IMR-90 (cell line): ENCODE measurements at regions of chrX and their contacts with region 1.

Region 1: GRCh38 chrX:154046031-154046781 is 26.5 kb upstream of the IRAK1 start:
- DNase-seq: peak; percentile 86
- ATAC-seq: peak; percentile 61
- H3K4me3 ChIP-seq: no peak overlapping the region
- H3K27ac ChIP-seq: peak overlapping the region; percentile 72
- H3K4me1 ChIP-seq: peaks cover 16% of the 10 kb centered on the region
- H3K27me3 ChIP-seq: no peaks in the 10 kb centered on the region
- CTCF ChIP-seq: peak; percentile 40
- POLR2A ChIP-seq: 0 out of 2 replicates have a peak, but pooled peaks have one; percentile 39
- RAD21 ChIP-seq: peak; percentile 44

Region 2: GRCh38 chrX:153909024-153909970 is 136.9 kb before region 1 on chrX:
- CTCF ChIA-PET with region 1: no interaction called
- POLR2A ChIA-PET with region 1: no interaction called
- dilution Hi-C with region 1: no loop called
- in situ Hi-C with region 1: no loop called
- intact Hi-C with region 1: no loop called
- DNase-seq: no peak
- ATAC-seq: peak; percentile 37; the same call in 1 of the 2 replicates
- H3K4me3 ChIP-seq: no peak overlapping the region
- H3K27ac ChIP-seq: no peak overlapping the region
- H3K4me1 ChIP-seq: no peaks in the 10 kb centered on the region
- H3K27me3 ChIP-seq: peaks cover 9% of the 10 kb centered on the region
- CTCF ChIP-seq: no peak
- POLR2A ChIP-seq: no peak
- RAD21 ChIP-seq: no peak

Region 3: DNA sequence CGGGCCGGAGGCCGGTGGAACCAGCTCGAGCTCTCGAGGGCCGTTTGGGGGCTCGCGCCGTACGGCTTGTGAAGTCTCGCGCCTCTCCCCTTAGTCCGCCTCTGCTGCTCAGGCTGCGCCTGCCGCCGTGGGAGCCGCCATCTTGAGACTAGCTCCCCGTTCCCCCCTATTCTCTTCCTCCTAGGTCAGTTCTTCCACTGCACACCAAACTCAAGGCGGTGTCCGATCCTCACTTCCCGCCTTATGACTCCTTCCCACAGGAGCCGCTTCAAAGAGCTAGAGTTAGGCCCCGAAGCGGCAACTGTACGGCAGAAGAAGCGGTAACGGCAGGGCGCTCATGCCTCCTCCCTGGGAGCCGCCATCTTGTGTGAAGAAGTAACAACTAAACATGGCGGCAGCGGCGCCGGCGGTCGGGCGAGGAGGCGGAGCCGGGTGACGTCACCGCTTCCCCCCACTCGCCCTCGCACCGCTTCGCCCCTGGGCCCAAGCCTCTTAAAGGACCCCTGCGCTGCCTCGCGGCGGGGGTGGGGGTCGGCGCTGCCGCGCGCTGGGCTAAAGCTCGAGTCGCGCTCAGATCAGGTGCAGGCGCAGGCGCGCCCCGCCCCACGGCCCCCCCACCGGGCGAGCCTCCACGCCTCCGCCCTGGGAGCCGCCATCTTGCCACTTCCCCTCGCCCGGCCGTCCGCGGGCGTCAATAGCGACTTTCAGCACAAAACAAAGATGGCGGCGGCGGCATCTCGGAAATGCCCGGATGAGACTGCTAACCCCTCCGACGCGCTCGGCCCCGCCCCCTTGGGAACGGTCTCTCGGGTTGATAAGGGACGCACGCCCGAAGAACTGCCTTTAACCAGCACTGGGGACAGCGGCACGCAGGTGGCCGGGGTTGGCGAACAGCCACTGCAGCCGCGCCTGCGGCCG is 74.5 kb before region 1 on chrX and contains the start of gene HCFC1:
- CTCF ChIA-PET with region 1: no interaction called
- POLR2A ChIA-PET with region 1: interaction called, 3 read pairs
- dilution Hi-C with region 1: no loop called
- in situ Hi-C with region 1: no loop called
- intact Hi-C with region 1: loop called (anchors 2 kb)
- DNase-seq: peak; percentile 84
- ATAC-seq: peak; percentile 40
- H3K4me3 ChIP-seq: peak within 1 kb of the TSS; percentile 96
- H3K27ac ChIP-seq: peak within 1 kb of the TSS; percentile 100
- H3K4me1 ChIP-seq: peaks cover 19% of the 10 kb centered on the region
- H3K27me3 ChIP-seq: no peaks in the 10 kb centered on the region
- CTCF ChIP-seq: no peak
- POLR2A ChIP-seq: peak; percentile 82
- RAD21 ChIP-seq: no peak
- total RNA-seq, gene HCFC1: 3.2 and 4.4 TPM in 2 replicates

Region 4: DNA sequence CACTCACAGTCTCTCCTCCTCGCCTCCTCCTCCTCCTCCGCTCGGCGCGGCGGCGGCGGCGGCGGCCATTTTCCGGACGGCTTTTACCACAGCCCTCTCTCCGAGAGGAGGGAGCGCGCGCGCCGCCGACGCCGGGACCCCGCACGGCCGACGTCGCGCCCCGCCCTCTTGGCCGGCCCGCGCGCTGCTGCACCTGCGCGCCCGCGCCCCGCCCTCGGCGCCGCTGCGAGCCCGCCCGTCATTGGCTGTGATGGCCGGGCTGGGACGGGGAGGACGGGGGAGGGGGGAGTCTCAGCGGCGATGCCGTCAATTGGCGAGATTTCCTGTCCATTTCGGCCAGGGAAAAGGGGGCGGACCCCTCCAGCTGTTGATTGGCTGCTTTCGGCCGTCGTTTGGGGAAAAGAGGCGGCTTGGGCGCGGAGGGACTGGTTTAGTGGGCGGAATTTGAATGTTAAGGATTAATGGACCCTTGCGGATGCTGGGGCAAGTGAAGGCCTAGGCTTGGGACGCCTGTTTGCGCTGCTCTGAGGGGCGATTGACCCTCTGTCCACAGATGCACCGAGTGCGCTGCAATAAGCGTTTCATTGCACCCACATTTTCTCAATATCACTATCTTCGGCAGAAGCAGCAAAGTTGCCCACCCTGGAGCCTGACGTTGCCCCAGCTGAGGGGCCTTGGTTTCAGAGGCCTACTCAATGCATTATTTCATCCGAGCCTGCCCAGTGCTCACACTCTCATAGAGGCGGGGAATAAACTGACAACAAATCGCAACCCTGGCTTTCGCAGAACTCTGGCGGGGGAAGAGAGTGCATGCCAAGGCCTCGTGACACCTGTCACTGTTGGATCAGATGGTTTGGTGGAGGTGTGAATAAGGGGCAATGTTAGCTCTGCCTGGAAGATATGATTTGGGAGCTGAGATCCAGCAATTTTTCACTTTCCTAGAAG is 51.7 kb after region 1 on chrX and contains the start of gene MECP2:
- CTCF ChIA-PET with region 1: interaction called, 3 read pairs
- POLR2A ChIA-PET with region 1: no interaction called
- dilution Hi-C with region 1: no loop called
- in situ Hi-C with region 1: no loop called
- intact Hi-C with region 1: loop called (anchors 5 kb)
- DNase-seq: peak; percentile 88
- ATAC-seq: peak; percentile 95
- H3K4me3 ChIP-seq: peak within 1 kb of the TSS; percentile 88
- H3K27ac ChIP-seq: peak within 1 kb of the TSS; percentile 93
- H3K4me1 ChIP-seq: peaks cover 5% of the 10 kb centered on the region
- H3K27me3 ChIP-seq: peaks cover 2% of the 10 kb centered on the region; the same call in 1 of the 2 replicates
- CTCF ChIP-seq: no peak
- POLR2A ChIP-seq: 0 out of 2 replicates have a peak, but pooled peaks have one; percentile 38
- RAD21 ChIP-seq: no peak
- total RNA-seq, gene MECP2: 8.4 and 10.8 TPM in 2 replicates